Head of caudate nucleus (tissue), 42 donors: ENCODE measurements at regions of chr22 and their contacts with region 1.

Region 1: DNA sequence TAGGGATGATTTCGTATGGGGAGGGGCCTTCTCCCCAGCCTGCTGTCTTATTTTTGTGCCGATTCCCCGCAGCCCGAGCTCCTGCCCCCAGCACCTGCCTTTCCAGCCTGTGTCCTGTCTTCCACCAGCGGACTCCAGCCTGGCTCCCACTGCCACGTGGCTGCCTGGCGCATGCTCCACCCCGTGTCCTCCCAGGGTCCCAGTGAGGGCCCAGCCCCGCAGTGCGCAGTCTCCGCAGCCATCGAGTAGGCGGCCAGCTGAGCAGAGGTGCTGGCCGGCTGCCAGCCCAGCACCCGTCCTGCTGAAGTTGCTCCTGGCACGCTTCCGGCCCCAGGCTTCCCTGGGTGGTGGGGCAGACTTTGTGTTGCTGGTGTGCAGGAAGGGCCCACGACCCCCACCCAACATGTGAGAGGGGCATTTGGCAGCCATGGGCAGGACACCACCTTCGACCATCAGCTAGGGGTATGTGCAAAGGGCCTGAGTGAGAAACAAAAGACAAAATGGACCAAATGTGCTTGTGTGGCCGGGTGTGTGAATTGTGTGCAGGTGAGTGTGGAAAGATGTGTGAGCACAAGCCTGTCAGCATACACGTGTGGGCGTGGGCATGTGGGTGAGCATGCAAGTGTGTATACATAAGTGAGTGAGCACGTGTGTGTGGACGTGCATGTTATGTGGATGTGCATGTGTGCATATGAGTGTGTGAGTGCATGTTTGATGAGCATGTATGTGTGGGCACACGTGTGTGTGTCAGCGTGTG is 55.9 kb downstream of the RTN4R start:
- DNase-seq: peak in 7 of 42 donors; percentile 18 to 46 (median 25)

Region 2: GRCh38 chr22:20164863-20165262 is 47.3 kb before region 1 on chr22:
- intact Hi-C with region 1: loop called (anchors 10 kb)
- DNase-seq: no peak